Heart left ventricle (tissue), 16 donors: ENCODE measurements at regions of chr12 and their contacts with region 1.

Region 1: DNA sequence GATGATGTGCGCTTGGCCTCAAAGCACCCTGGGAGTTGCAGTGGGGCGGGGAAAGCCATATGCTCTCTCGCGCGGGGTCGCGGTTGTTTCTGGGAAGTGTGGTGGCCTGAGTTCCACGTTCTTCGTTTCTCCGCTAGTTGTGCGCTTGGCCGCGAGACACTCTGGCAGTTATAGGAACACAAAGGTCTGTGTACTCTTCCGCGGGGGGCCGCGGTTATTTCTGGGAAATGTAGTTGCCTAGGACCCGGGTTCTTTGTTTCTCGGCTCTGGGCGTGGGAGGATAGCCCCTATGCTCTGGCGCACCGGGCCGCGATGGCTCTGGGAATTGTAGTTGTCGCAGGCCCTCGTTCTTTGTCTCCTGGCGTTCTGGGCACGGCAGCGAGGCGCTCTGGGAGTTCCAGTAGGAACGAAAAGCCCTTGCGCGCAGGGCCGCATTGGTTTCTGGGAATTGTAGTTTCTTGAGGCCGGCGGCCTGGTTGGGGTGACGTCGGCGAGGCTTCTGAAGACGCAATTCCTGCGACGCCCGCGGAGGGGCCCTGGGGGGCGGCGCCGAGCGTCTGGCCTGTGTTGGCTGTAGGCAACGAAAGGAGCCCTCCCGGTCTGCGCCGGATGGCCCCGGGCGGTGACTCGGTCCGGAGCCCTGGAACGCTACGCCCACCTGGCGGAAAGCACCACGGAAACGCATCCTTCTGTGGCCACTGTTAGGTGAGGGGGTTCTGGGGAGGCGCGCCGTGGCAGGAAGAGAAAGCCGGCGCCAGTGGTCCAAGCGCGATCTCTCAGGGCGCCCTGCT is at the start of gene ZNF140:
- DNase-seq: peak; percentile 97
- ATAC-seq: peak; percentile 86 to 87 (median 87)
- H3K4me3 ChIP-seq: peak within 1 kb of the TSS; percentile 53 to 96 (median 84)
- H3K27ac ChIP-seq: peak within 1 kb of the TSS; percentile 91 to 99 (median 97)
- H3K4me1 ChIP-seq: peaks cover 0 to 22% (median 9%) of the 10 kb centered on the region in 12 donors
- H3K27me3 ChIP-seq: no peaks in the 10 kb centered on the region
- CTCF ChIP-seq: peak in 9 of 12 donors; percentile 11 to 43 (median 28)
- POLR2A ChIP-seq: peak in 1 of 2 donors; percentile 60
- total RNA-seq, gene ZNF140: 6.5 to 13.0 (median 8.7) TPM

Region 2: DNA sequence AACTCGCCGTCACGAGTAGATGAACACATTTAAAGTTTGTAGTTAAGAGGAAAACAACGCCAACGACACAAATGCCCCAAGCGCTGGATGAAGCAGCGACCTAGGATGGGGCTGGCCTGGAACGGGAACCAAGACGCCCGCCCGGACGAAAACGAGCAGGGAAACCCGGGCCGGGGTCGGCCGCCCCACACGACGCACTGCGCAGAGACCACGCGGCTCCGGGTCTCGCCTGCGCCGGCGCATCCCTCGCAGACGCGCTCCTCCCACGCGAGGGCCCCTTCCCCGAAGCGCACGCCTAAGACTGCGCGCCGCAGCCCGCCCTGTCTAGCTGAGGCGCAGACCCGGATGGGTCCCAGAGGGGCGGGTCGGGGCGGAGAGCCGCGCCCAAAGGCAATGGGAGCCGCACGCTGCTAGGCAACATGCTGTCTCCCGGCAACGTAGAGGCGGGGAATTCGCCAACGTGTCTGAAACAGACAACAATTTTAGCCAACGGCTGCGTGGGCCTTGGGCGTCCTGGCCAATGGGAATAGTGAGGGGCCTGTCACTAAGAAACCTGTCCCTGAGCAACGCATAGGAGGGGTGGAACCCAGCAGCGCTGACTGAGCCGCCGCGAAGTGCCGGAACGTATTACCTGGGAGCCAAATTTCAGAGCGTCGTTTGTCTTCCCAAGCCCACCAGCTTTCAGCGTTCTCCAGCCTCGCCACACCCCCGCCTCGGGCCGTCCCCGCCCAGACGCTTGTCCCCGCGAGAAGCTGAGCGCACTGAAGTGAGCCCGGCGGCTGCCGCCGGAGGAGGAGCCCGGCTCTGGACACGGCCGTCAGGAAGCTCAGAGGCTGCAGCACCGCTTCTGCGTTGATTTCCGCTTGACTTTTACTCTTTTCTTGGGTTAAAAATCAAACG is 172.2 kb before region 1 on chr12:
- intact Hi-C with region 1: loop called in 1 of 10 experiments (anchors 1 kb)
- DNase-seq: peak; percentile 97 to 98 (median 98)
- ATAC-seq: peak; percentile 96 to 98 (median 98)
- H3K4me3 ChIP-seq: peak overlapping the region; percentile 18 to 83 (median 64)
- H3K27ac ChIP-seq: peak overlapping the region; percentile 47 to 85 (median 72)
- H3K4me1 ChIP-seq: peaks cover 0 to 24% (median 8%) of the 10 kb centered on the region in 12 donors
- H3K27me3 ChIP-seq: peaks cover 0 to 27% (median 5%) of the 10 kb centered on the region in 9 donors
- CTCF ChIP-seq: no peak
- POLR2A ChIP-seq: peak in 1 of 2 donors; percentile 39

Region 3: GRCh38 chr12:132986001-132986912 is 94.3 kb before region 1 on chr12 and contains the start of gene ZNF26:
- intact Hi-C with region 1: loop called in 6 of 10 experiments (anchors 1 to 5 kb)
- DNase-seq: peak; percentile 92 to 95 (median 93)
- ATAC-seq: peak; percentile 99 to 100 (median 100)
- H3K4me3 ChIP-seq: peak within 1 kb of the TSS; percentile 62 to 97 (median 82)
- H3K27ac ChIP-seq: peak within 1 kb of the TSS; percentile 53 to 91 (median 84)
- H3K4me1 ChIP-seq: peaks cover 6 to 18% (median 12%) of the 10 kb centered on the region in 12 donors
- H3K27me3 ChIP-seq: no peaks in the 10 kb centered on the region
- CTCF ChIP-seq: no peak
- POLR2A ChIP-seq: peak in 1 of 2 donors; percentile 71
- total RNA-seq, gene ZNF26: 0.60 to 6.7 (median 3.7) TPM

Region 4: DNA sequence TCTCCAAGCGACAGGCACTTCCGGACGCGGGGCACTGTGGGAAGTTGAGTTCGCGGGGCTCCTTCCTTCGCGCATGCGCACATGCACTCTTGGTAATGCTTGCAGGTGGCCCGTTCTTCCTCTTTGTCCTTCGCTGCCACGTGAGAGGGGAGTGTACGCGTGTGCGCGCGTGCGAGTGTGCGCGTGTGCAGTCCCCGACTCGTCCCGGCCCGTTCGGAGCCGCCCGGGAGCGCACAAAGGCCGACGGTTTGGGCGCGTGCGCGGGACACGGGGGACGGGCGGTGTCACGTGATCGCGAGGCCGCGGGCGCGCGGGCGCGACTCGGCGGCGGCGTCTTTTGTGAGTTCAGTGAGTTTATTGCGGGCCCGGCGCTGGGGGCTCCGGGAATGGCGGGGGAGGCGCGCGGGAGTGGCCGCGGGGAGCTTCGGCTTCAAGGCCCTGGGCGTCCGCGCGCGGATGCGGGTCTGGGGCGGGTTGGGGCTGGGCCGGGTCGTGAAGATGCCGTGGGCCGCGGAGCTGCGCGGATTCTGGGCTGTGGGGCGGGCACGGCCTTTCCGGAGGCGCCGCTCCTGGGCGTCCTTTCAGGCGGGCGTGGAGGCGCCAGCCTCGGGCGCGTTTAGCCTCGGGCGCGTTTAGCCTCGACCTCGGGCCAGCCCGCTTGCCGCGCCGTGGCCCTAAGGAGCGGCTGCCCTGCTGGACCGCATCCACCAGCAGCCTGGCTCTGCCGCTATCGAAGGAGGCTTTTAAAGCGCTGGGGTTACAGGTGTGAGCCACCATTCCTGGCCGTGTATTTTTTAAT is 43.2 kb before region 1 on chr12 and contains the start of gene ZNF84:
- intact Hi-C with region 1: loop called in 8 of 10 experiments (anchors 1 to 5 kb)
- DNase-seq: peak; percentile 96 to 98 (median 98)
- ATAC-seq: peak; percentile 99 to 100 (median 99)
- H3K4me3 ChIP-seq: peak within 1 kb of the TSS; percentile 60 to 86 (median 78)
- H3K27ac ChIP-seq: peak within 1 kb of the TSS; percentile 79 to 97 (median 92)
- H3K4me1 ChIP-seq: peaks cover 0 to 21% (median 7%) of the 10 kb centered on the region in 12 donors
- H3K27me3 ChIP-seq: no peaks in the 10 kb centered on the region
- CTCF ChIP-seq: no peak
- POLR2A ChIP-seq: peak in 1 of 2 donors; percentile 57
- total RNA-seq, gene ZNF84: 11.0 to 24.0 (median 15.9) TPM

Region 5: DNA sequence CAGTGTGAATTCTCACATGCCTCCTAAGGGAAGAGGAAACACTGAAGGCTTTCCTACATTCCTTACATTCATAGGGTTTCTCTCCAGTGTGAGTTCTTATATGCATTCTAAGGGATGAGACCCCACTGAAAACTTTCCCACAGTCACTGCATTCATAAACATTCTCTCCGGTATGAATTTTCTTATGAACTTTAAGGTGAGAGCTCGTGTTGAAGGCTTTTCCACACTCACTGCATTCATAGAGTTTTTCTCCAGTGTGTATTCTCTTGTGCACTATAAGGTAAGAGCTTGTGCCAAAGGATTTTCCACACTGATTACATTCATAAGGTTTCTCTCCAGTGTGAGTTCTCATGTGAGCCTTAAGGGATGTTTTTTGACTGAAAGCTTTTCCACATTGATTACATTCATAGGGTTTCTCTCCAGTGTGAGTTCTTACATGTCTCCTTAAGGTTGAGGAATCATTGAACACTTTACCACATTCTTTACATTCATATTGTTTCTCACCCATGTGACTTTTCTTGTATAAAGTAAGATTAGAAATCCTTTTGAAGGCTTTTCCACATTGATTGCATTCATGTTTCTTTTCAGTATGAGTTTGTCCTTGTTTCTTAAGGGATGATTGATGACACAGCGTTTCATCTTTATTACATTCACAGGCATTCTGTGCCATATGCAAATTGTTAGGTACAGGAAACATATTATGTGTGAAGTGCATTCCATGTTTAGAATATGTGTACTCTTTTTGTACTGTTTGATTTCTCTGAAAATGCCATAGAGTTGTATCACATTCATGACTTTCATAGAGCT is 40.0 kb after region 1 on chr12:
- intact Hi-C with region 1: loop called in 3 of 10 experiments (anchors 5 kb)
- DNase-seq: no peak
- ATAC-seq: no peak
- H3K4me3 ChIP-seq: no peak overlapping the region
- H3K27ac ChIP-seq: no peak overlapping the region
- H3K4me1 ChIP-seq: no peaks in the 10 kb centered on the region
- H3K27me3 ChIP-seq: no peaks in the 10 kb centered on the region
- CTCF ChIP-seq: no peak
- POLR2A ChIP-seq: no peak

Region 6: GRCh38 chr12:133130038-133130807 is 49.7 kb after region 1 on chr12 and contains the starts of genes ZNF10 and ZNF891:
- intact Hi-C with region 1: loop called in 9 of 10 experiments (anchors 1 to 5 kb)
- DNase-seq: peak; percentile 97 to 98 (median 97)
- ATAC-seq: peak; percentile 97 to 99 (median 98)
- H3K4me3 ChIP-seq: peak within 1 kb of the TSS; percentile 50 to 92 (median 84)
- H3K27ac ChIP-seq: peak within 1 kb of the TSS; percentile 86 to 99 (median 94)
- H3K4me1 ChIP-seq: peaks cover 0 to 16% (median 2%) of the 10 kb centered on the region in 12 donors
- H3K27me3 ChIP-seq: no peaks in the 10 kb centered on the region
- CTCF ChIP-seq: no peak
- POLR2A ChIP-seq: peak; percentile 54 to 87
- total RNA-seq, gene ZNF10: 4.8 to 9.9 (median 8.1) TPM
- total RNA-seq, gene ZNF891: 0.60 to 1.3 (median 1.0) TPM

Region 7: DNA sequence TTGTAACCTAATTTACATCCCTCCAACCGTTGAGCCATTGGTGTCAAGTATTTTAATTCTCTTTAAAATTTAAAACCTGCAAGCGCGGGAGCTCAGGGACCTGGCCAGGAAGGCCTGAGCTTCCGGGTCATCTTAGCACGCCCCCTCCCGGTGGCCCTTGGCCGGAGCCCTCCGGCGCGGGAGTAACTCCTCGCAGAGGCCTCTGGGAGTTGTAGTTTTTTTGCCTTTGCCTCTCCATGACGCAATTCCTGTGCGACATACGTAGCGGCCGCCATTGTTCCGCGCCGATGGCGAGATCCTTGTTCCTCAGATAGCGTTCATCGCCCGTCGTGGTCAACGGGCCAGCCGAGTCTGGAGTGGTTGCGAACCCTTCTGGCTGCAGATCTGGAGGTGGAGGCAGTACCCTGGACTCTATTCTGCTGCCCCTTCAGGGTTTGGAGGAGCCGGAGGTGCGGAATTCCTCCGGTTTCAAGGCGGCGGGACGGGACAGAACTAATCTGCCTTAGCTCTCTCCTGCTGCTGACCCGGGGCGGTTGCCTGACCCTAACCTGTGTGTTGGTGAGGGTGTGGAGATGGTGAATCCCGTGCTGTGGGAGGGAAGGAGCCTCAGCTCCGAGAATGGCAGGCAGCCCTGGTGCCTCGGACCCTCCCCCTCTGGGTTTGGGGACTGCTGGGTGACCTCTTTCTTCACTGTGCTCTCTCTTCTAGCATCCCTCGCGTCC is 100.8 kb after region 1 on chr12 and contains the start of gene ZNF268:
- intact Hi-C with region 1: loop called in 3 of 10 experiments (anchors 1 kb)
- DNase-seq: peak; percentile 92 to 95 (median 94)
- ATAC-seq: peak; percentile 94 to 99 (median 98)
- H3K4me3 ChIP-seq: peak within 1 kb of the TSS; percentile 63 to 97 (median 87)
- H3K27ac ChIP-seq: peak within 1 kb of the TSS in 11 of 12 donors; percentile 45 to 83 (median 70)
- H3K4me1 ChIP-seq: peaks cover 0 to 12% (median 7%) of the 10 kb centered on the region in 12 donors
- H3K27me3 ChIP-seq: no peaks in the 10 kb centered on the region
- CTCF ChIP-seq: peak; percentile 69 to 96 (median 88)
- POLR2A ChIP-seq: peak in 1 of 2 donors; percentile 49
- total RNA-seq, gene ZNF268: 8.1 to 15.5 (median 10.0) TPM